ENCODE measurements at regions of chr1 and their contacts with region 1.

Region 1: DNA sequence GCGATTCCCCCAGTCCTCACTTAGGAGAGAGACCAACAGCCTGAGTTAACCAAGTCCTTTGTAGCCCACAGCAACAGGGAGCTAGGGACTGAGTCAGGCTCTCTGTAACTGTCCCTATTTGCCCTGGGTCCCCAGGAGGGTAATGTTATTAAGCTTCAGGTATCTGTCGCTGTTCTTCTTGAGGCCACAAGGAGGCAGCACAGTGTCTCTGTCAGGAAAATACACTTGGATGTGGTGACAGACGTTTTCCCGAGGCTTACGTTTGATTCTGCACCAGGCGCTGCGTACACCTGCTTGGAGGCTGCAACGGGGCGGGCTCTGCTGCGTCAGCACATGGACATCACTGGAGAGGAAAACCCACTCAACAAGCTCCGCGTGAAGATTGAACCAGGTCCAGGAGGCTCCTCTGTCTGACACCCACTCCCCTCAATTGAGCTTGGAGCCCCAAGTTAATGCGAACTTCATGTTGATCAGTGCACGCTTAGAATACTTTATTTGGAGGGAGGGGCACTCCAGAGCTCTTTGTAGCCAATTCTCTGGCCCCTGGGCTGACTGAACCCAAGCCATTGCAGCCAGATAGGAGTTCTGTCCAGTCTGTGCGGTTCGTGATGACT is 10.7 kb upstream of the ELF3 start:
- DNase-seq: peak; percentile 43
- H3K4me3 ChIP-seq: no peak overlapping the region
- H3K27ac ChIP-seq: no peak overlapping the region
- H3K4me1 ChIP-seq: no peaks in the 10 kb centered on the region
- H3K27me3 ChIP-seq: no peaks in the 10 kb centered on the region
- CTCF ChIP-seq: peak; percentile 78 to 92

Region 2: DNA sequence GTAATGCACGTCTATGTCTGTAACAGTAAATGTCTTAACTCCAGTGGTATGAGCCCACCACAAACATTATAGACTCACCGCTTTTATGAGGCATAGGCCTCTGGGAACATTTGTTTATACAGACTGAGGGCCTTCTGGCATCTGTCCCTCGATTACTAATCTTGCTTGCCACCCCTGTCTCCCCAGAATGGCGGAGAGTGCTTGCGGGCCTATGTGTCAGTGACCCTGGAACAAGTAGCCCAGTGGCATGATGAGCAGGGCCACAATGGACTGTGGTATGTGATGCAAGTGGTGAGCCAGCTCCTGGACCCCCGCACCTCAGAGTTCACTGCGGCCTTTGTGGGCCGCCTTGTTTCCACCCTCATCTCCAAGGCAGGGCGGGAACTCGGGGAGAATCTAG is 129.3 kb before region 1 on chr1:
- CTCF ChIA-PET with region 1: no interaction called
- dilution Hi-C with region 1: no loop called
- in situ Hi-C with region 1: no loop called
- intact Hi-C with region 1: no loop called
- DNase-seq: no peak
- H3K4me3 ChIP-seq: no peak overlapping the region
- H3K27ac ChIP-seq: no peak overlapping the region
- H3K4me1 ChIP-seq: no peaks in the 10 kb centered on the region
- H3K27me3 ChIP-seq: no peaks in the 10 kb centered on the region
- CTCF ChIP-seq: no peak

Region 3: GRCh38 chr1:201912832-201913231 is 86.9 kb before region 1 on chr1:
- CTCF ChIA-PET with region 1: interaction called, 7 read pairs
- dilution Hi-C with region 1: loop called (anchors 5 kb)
- in situ Hi-C with region 1: no loop called
- intact Hi-C with region 1: no loop called
- DNase-seq: no peak
- H3K4me3 ChIP-seq: no peak overlapping the region
- H3K27ac ChIP-seq: no peak overlapping the region
- H3K4me1 ChIP-seq: peaks cover 14% of the 10 kb centered on the region
- H3K27me3 ChIP-seq: no peaks in the 10 kb centered on the region
- CTCF ChIP-seq: no peak

Region 4: GRCh38 chr1:201982623-201983379 is 16.9 kb before region 1 on chr1 and contains the start of gene RNPEP:
- CTCF ChIA-PET with region 1: interaction called, 13 read pairs
- dilution Hi-C with region 1: no loop called
- in situ Hi-C with region 1: no loop called
- intact Hi-C with region 1: no loop called
- DNase-seq: peak; percentile 77
- H3K4me3 ChIP-seq: peak within 1 kb of the TSS; percentile 85 to 94 (median 89)
- H3K27ac ChIP-seq: peak within 1 kb of the TSS; percentile 57
- H3K4me1 ChIP-seq: peaks cover 41% of the 10 kb centered on the region
- H3K27me3 ChIP-seq: no peaks in the 10 kb centered on the region
- CTCF ChIP-seq: peak; percentile 3 to 32
- total RNA-seq, gene RNPEP: 68.8 to 94.0 TPM

Region 5: GRCh38 chr1:202056644-202057461 is 57.1 kb after region 1 on chr1:
- CTCF ChIA-PET with region 1: no interaction called
- dilution Hi-C with region 1: no loop called
- in situ Hi-C with region 1: no loop called
- intact Hi-C with region 1: no loop called
- DNase-seq: peak; percentile 96
- H3K4me3 ChIP-seq: no peak overlapping the region
- H3K27ac ChIP-seq: peak overlapping the region; percentile 92
- H3K4me1 ChIP-seq: peaks cover 19% of the 10 kb centered on the region
- H3K27me3 ChIP-seq: no peaks in the 10 kb centered on the region
- CTCF ChIP-seq: no peak

Region 6: GRCh38 chr1:202112839-202113672 is 113.3 kb after region 1 on chr1:
- CTCF ChIA-PET with region 1: no interaction called
- dilution Hi-C with region 1: no loop called
- in situ Hi-C with region 1: loop called (anchors 5 kb)
- intact Hi-C with region 1: loop called (anchors 2 kb)
- DNase-seq: peak; percentile 64
- H3K4me3 ChIP-seq: no peak overlapping the region
- H3K27ac ChIP-seq: peak overlapping the region; percentile 32
- H3K4me1 ChIP-seq: peaks cover 20% of the 10 kb centered on the region
- H3K27me3 ChIP-seq: no peaks in the 10 kb centered on the region
- CTCF ChIP-seq: no peak

Region 7: GRCh38 chr1:202315576-202316168 is 315.9 kb after region 1 on chr1:
- CTCF ChIA-PET with region 1: no interaction called
- dilution Hi-C with region 1: loop called (anchors 5 kb)
- in situ Hi-C with region 1: no loop called
- intact Hi-C with region 1: no loop called
- DNase-seq: peak; percentile 44
- H3K4me3 ChIP-seq: no peak overlapping the region
- H3K27ac ChIP-seq: no peak overlapping the region
- H3K4me1 ChIP-seq: peaks cover 6% of the 10 kb centered on the region
- H3K27me3 ChIP-seq: no peaks in the 10 kb centered on the region
- CTCF ChIP-seq: peak; percentile 99

Measured in mammary epithelial cell (primary cell).